ENCODE measurements at regions of chr1 and their contacts with region 1.

Region 1: DNA sequence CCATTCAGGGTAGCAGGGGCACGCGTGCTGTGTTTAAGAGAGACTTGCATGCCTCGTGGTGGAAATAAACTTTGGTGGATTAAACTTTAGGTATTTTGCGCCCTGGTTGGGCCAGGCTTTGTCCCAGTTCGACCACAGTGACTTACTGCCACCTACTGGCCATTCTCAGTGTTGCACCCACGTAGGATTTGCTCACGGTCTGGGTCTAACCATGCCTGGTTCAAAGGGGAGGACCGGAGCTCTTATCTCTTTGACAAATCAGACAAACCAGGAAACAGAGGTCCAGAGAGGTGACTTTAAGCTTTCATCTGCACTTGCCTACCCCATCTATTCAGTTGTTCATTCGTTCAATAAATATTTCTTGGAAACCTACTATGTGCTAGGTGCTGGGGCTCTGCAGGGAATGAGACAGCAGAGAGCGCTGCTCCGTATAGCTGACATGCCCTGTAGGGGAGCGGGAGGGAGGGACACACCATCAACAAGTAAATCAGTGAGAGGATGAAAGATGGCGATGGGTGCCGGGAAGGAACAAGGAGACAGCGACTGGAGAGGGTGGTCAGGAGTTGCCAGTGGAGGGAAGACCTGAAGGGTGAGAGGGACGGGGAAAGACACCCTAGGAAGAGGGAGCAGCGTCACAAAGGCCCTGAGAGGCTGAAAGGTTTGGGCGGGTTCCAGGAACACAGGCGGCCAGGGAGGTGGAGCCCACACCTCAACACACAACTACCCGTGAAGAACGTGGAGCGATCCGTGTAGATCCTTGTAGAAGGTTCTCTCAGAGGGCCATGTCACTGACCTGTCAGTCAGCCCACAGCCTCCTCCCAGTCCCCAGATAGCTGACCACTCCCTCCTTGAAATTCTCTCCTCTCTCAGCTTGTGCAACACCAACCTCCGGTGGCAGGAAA is 27.2 kb upstream of the TINAGL1 start:
- DNase-seq: peak; percentile 74 to 84
- ATAC-seq: peak; percentile 93 to 94
- H3K4me3 ChIP-seq: peak overlapping the region; percentile 45
- H3K27ac ChIP-seq: peak overlapping the region; percentile 83 to 93
- H3K4me1 ChIP-seq: peaks cover 14% of the 10 kb centered on the region
- CTCF ChIP-seq: peak; percentile 92
- EP300 ChIP-seq: no peak
- POLR2A ChIP-seq: no peak; the same call in 1 of the 2 replicates
- RAD21 ChIP-seq: peak; percentile 90 to 93

Region 2: GRCh38 chr1:31368611-31369107 is 180.5 kb before region 1 on chr1:
- CTCF ChIA-PET with region 1: interaction called, 10 read pairs
- POLR2A ChIA-PET with region 1: no interaction called
- DNase-seq: no peak
- ATAC-seq: no peak
- H3K4me3 ChIP-seq: no peak overlapping the region
- H3K27ac ChIP-seq: no peak overlapping the region
- H3K4me1 ChIP-seq: no peaks in the 10 kb centered on the region
- CTCF ChIP-seq: no peak
- EP300 ChIP-seq: no peak
- POLR2A ChIP-seq: no peak
- RAD21 ChIP-seq: no peak

Region 3: GRCh38 chr1:31422505-31423319 is 126.4 kb before region 1 on chr1:
- CTCF ChIA-PET with region 1: interaction called, 48 read pairs
- POLR2A ChIA-PET with region 1: interaction called, 3 read pairs
- DNase-seq: peak; percentile 71 to 75
- ATAC-seq: peak; percentile 92 to 93
- H3K4me3 ChIP-seq: no peak overlapping the region
- H3K27ac ChIP-seq: peak overlapping the region; percentile 63 to 69
- H3K4me1 ChIP-seq: peaks cover 29% of the 10 kb centered on the region
- CTCF ChIP-seq: peak; percentile 68
- EP300 ChIP-seq: no peak
- POLR2A ChIP-seq: no peak
- RAD21 ChIP-seq: peak; percentile 83 to 85

Region 4: GRCh38 chr1:31524186-31524901 is 24.8 kb before region 1 on chr1:
- CTCF ChIA-PET with region 1: no interaction called
- POLR2A ChIA-PET with region 1: no interaction called
- DNase-seq: no peak
- ATAC-seq: no peak
- H3K4me3 ChIP-seq: no peak overlapping the region
- H3K27ac ChIP-seq: no peak overlapping the region
- H3K4me1 ChIP-seq: peaks cover 18% of the 10 kb centered on the region; the same call in 2 of the 3 replicates
- CTCF ChIP-seq: no peak
- EP300 ChIP-seq: no peak
- POLR2A ChIP-seq: no peak
- RAD21 ChIP-seq: no peak

Region 5: GRCh38 chr1:31535561-31535960 is 13.6 kb before region 1 on chr1:
- CTCF ChIA-PET with region 1: interaction called, 28 read pairs
- POLR2A ChIA-PET with region 1: no interaction called
- DNase-seq: no peak
- ATAC-seq: no peak
- H3K4me3 ChIP-seq: no peak overlapping the region
- H3K27ac ChIP-seq: no peak overlapping the region
- H3K4me1 ChIP-seq: peaks cover 9% of the 10 kb centered on the region; the same call in 2 of the 3 replicates
- CTCF ChIP-seq: no peak
- EP300 ChIP-seq: no peak
- POLR2A ChIP-seq: no peak
- RAD21 ChIP-seq: no peak

Region 6: GRCh38 chr1:31564134-31564989 is 15.2 kb after region 1 on chr1:
- CTCF ChIA-PET with region 1: interaction called, 22 read pairs
- POLR2A ChIA-PET with region 1: no interaction called
- DNase-seq: peak; percentile 44 to 62
- ATAC-seq: peak; percentile 88 to 90
- H3K4me3 ChIP-seq: no peak overlapping the region
- H3K27ac ChIP-seq: peak overlapping the region in 1 of 2 experiments; percentile 51; a peak in 1 of 6 replicates
- H3K4me1 ChIP-seq: peaks cover 25% of the 10 kb centered on the region
- CTCF ChIP-seq: peak; percentile 81
- EP300 ChIP-seq: no peak
- POLR2A ChIP-seq: no peak
- RAD21 ChIP-seq: peak; percentile 88 to 92

Region 7: GRCh38 chr1:31593770-31594632 is 44.8 kb after region 1 on chr1:
- CTCF ChIA-PET with region 1: interaction called, 19 read pairs
- POLR2A ChIA-PET with region 1: no interaction called
- DNase-seq: peak; percentile 67 to 70
- ATAC-seq: peak; percentile 94 to 98
- H3K4me3 ChIP-seq: no peak overlapping the region
- H3K27ac ChIP-seq: no peak overlapping the region
- H3K4me1 ChIP-seq: peaks cover 12% of the 10 kb centered on the region; the same call in 2 of the 3 replicates
- CTCF ChIP-seq: peak; percentile 79
- EP300 ChIP-seq: no peak
- POLR2A ChIP-seq: no peak
- RAD21 ChIP-seq: peak; percentile 80 to 87

Measured in A549 (cell line).